ENCODE measurements at regions of chr1 and their contacts with region 1.

Region 1: DNA sequence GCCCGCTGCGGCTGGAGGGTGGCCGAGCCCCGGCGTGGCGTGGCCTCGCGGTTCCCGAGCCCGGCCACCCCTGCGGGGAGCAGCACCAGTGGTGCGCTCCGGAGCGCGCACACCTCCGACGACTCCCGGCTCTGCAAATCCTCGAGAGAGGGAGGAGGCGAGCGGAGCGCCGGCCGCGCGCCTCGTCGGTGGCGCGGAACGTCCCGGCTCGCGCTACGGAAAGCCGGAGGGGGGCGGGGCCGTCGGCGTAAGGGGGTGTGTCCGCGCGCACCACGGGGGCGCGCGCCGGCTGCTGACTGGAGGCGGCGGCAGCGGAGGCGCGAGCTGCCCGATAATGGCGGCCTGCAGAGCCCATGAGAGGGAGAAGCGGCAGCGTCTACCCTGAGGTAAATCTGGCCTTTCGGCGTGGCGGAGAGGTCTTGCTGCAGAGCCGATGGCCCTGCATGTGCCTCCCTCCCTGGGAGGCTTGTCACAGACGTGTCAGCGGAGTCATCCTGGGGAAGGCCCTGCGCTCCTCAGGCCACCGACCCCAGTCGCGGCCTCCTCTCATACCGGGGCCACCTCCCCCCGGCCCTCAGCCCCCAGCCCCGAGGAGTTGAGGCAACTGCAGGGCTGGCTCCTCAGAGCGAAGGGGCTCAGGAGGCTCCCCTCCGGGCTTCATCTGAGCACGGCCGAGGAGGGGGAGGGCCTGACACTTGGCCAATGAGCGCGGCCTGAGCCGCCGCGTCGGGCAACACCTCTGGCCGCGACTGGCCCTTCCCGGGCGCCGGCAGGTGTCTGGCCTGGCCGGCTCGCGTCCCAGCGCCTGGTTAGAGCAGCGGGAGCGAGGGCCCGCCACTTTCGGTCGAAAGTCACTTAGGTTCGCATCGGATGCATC is at the start of gene PDIK1L:
- DNase-seq: peak; percentile 97
- ATAC-seq: peak; percentile 85
- H3K4me3 Mint-ChIP-seq: peak within 1 kb of the TSS; percentile 96
- H3K27ac Mint-ChIP-seq: peak within 1 kb of the TSS; percentile 91
- H3K4me1 Mint-ChIP-seq: peaks cover 27% of the 10 kb centered on the region
- H3K27me3 Mint-ChIP-seq: no peaks in the 10 kb centered on the region
- total RNA-seq, gene PDIK1L: 12.3 to 13.0 TPM

Region 2: GRCh38 chr1:25247024-25247828 is 864.5 kb before region 1 on chr1 and contains the start of gene RSRP1:
- CTCF ChIA-PET with region 1: no interaction called
- POLR2A ChIA-PET with region 1: no interaction called
- intact Hi-C with region 1: loop called in 1 of 2 experiments (anchors 2 kb)
- DNase-seq: peak; percentile 100
- ATAC-seq: peak; percentile 90
- H3K4me3 Mint-ChIP-seq: peak within 1 kb of the TSS; percentile 96
- H3K27ac Mint-ChIP-seq: peak within 1 kb of the TSS; percentile 99
- H3K4me1 Mint-ChIP-seq: peaks cover 40% of the 10 kb centered on the region
- H3K27me3 Mint-ChIP-seq: no peaks in the 10 kb centered on the region
- total RNA-seq, gene RSRP1: 86.8 to 120 TPM

Region 3: GRCh38 chr1:25997828-25998761 is 113.7 kb before region 1 on chr1 and contains the start of gene PAFAH2:
- CTCF ChIA-PET with region 1: no interaction called
- POLR2A ChIA-PET with region 1: no interaction called
- intact Hi-C with region 1: loop called in 1 of 2 experiments (anchors 1 kb)
- DNase-seq: peak; percentile 99
- ATAC-seq: peak; percentile 98
- H3K4me3 Mint-ChIP-seq: peak within 1 kb of the TSS; percentile 98
- H3K27ac Mint-ChIP-seq: peak within 1 kb of the TSS; percentile 98
- H3K4me1 Mint-ChIP-seq: peaks cover 28% of the 10 kb centered on the region
- H3K27me3 Mint-ChIP-seq: no peaks in the 10 kb centered on the region
- total RNA-seq, gene PAFAH2: 6.6 to 7.9 TPM

Region 4: DNA sequence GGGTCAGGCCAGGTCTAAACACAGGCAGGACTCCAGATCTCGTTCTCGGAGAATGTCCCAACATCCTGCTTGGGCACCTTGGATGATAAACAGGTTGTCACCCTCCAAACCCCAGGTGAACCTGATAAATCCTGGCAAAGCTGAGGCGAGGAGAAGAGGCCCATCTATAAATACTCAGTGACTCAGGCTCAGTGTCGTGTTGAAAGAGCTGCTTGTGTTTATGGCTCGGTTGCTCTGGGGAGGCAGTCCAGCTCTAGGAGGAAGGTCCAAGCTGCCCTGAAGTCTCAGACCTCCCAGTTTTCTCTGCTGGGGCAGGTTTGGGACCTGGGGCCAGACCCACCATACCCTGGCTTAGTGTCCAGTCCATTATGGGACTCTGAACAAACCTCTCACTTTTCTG is 28.5 kb before region 1 on chr1:
- CTCF ChIA-PET with region 1: no interaction called
- POLR2A ChIA-PET with region 1: no interaction called
- intact Hi-C with region 1: no loop called
- DNase-seq: no peak
- ATAC-seq: no peak
- H3K4me3 Mint-ChIP-seq: no peak overlapping the region
- H3K27ac Mint-ChIP-seq: no peak overlapping the region
- H3K4me1 Mint-ChIP-seq: no peaks in the 10 kb centered on the region
- H3K27me3 Mint-ChIP-seq: peaks cover 17% of the 10 kb centered on the region

Region 5: DNA sequence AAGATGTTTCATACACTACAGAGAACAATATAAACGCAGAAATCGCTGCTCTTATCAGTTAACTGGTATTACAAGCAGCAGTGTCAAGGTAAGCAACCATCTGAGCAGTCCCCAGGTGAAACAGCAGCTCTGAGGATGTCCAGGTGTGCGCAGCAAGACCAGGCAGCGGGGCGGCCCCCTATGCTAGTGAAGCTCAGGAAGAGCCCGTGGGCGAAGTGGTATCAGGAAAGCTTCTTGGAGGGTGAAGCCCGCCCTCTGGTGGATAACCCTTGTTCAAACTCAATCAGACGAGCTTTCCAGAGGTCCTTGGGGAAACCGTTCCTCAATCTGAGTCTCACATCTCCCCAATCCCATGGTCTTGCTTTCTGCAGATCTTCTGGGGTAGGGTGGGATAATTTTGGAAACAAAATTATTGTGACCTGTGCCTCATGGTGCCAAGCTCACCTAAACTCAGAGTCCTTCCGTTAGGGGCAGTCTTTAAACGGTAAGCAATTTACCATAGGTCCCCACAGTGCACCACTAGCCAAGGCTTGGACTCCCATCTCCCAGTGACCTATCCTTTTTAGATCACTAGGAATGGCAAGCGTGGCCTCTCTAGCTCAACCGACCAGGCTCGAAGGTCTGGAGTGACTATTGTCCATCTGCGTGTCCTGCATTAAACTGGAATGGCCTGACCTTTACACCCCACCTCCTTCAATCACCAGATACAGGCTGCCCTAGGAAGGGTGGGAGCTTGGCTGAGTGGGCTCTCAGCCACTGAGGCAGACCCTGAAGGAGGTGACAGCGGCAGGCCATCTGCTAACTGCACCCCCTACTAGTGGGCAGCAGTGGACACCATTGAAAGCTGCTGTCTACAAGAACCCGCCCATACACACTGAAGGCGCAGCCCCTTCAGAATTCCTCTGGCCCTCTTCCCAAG is 33.5 kb after region 1 on chr1:
- CTCF ChIA-PET with region 1: interaction called, 187 read pairs
- POLR2A ChIA-PET with region 1: interaction called, 6 read pairs
- intact Hi-C with region 1: no loop called
- DNase-seq: peak; percentile 89
- ATAC-seq: peak; percentile 89
- H3K4me3 Mint-ChIP-seq: no peak overlapping the region
- H3K27ac Mint-ChIP-seq: no peak overlapping the region
- H3K4me1 Mint-ChIP-seq: peaks cover 6% of the 10 kb centered on the region
- H3K27me3 Mint-ChIP-seq: peaks cover 2% of the 10 kb centered on the region

Region 6: DNA sequence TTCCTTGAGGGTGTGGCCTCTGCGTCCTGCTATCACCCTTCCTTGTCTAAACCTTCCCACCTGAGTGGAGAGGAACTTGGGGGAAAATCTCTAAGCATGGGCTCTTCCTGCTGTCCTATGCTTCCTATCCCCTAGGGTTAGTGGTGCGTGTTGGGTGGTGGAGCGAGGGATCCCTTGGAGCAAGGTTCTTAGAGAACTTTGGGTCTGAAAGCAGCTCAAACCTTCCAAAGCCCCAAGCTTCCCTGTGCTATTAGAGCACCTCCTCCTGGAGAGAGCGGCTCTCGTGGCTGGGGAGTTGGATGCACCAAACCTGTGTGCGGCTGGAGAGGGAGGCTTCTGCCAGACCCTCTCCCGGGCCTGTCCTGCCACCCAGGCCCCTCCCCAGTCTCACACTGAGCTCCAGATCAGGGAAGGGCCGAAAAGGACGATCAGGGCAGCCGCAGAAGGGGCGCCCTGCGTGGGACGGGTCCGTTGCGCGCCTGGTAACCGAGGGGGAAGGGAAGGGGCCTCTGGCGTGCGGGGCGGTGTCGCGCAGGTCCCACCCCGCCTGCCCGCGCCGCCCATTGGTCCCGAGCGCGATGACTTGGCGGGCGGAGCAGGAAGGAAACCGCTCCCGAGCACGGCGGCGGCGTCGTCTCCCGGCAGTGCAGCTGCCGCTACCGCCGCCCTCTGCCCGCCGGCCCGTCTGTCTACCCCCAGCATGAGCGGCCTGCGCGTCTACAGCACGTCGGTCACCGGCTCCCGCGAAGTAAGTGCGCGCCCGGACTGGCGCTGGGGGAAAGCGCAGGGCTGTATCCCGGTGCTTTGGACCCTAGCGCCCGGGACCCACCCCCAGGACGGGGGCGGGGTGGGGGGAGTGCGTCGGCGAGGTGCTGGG is 167.9 kb after region 1 on chr1 and contains the start of gene SH3BGRL3:
- CTCF ChIA-PET with region 1: no interaction called
- POLR2A ChIA-PET with region 1: no interaction called
- intact Hi-C with region 1: loop called in 1 of 2 experiments (anchors 1 kb)
- DNase-seq: peak; percentile 92
- ATAC-seq: peak; percentile 56
- H3K4me3 Mint-ChIP-seq: peak within 1 kb of the TSS; percentile 78
- H3K27ac Mint-ChIP-seq: peak within 1 kb of the TSS; percentile 94
- H3K4me1 Mint-ChIP-seq: peaks cover 82% of the 10 kb centered on the region
- H3K27me3 Mint-ChIP-seq: no peaks in the 10 kb centered on the region
- total RNA-seq, gene SH3BGRL3: 267 to 381 TPM

Region 7: GRCh38 chr1:26431979-26432695 is 320.4 kb after region 1 on chr1 and contains the start of gene DHDDS:
- CTCF ChIA-PET with region 1: no interaction called
- POLR2A ChIA-PET with region 1: no interaction called
- intact Hi-C with region 1: loop called in 1 of 2 experiments (anchors 1 kb)
- DNase-seq: peak; percentile 99
- ATAC-seq: peak; percentile 98
- H3K4me3 Mint-ChIP-seq: peak within 1 kb of the TSS; percentile 92
- H3K27ac Mint-ChIP-seq: peak within 1 kb of the TSS; percentile 92
- H3K4me1 Mint-ChIP-seq: peaks cover 17% of the 10 kb centered on the region
- H3K27me3 Mint-ChIP-seq: no peaks in the 10 kb centered on the region
- total RNA-seq, gene DHDDS: 34.1 to 40.7 TPM

Region 8: DNA sequence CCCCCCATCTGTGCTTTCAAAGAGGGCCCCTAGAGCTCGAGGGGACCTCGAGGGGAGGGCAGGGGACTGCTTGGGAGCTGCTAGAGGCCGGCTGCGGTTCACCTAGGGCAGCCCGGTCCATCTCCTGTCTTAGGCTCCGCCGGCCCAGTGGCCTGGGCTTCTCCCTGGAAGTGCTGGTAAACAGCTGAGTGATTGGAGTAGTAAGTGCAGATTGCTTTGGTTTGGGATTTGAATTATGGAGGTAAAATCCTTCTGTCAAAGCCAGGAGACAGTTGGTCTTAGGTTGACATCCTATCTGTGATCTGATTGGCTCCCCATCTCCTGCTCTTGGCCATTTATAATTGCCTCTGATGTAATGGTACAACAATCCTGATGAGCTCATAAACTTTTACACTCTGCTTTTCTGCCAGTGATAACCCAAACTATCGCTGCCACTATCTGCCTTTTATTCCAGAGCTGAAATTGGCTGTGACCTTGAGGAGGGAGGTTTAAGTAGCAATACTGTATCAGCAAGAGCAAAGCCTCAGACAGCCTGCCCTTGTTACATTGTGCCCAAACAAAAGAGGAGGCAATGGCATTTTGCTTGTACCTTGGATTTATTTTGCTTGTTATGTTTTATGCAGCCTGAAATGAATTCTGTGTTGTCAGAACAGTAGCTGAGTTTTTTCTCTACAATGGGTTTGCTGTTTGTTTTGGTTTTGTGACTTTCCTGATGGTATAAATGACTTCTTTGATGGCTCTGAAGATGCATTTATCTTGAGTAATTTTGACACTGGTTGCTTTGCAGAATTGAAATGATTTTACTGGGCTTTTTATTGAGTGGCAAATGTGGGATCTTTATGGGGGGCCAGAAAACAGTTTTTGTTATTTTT is 586.4 kb after region 1 on chr1:
- CTCF ChIA-PET with region 1: no interaction called
- POLR2A ChIA-PET with region 1: no interaction called
- intact Hi-C with region 1: no loop called
- DNase-seq: peak; percentile 50
- ATAC-seq: peak; percentile 45
- H3K4me3 Mint-ChIP-seq: no peak overlapping the region
- H3K27ac Mint-ChIP-seq: no peak overlapping the region
- H3K4me1 Mint-ChIP-seq: peaks cover 19% of the 10 kb centered on the region
- H3K27me3 Mint-ChIP-seq: no peaks in the 10 kb centered on the region

Region 9: GRCh38 chr1:26921540-26922430 is 810.0 kb after region 1 on chr1 and contains the start of gene NUDC:
- CTCF ChIA-PET with region 1: no interaction called
- POLR2A ChIA-PET with region 1: no interaction called
- intact Hi-C with region 1: loop called in 1 of 2 experiments (anchors 2 kb)
- DNase-seq: peak; percentile 98
- ATAC-seq: peak; percentile 98
- H3K4me3 Mint-ChIP-seq: peak within 1 kb of the TSS; percentile 82
- H3K27ac Mint-ChIP-seq: peak within 1 kb of the TSS; percentile 90
- H3K4me1 Mint-ChIP-seq: peaks cover 38% of the 10 kb centered on the region
- H3K27me3 Mint-ChIP-seq: no peaks in the 10 kb centered on the region
- total RNA-seq, gene NUDC: 95.9 to 101 TPM

Measured in activated CD4-positive, alpha-beta T cell treated with anti-CD3 and anti-CD28 coated beads for 36 hours (primary cell).